Motor neuron (in vitro differentiated cells): ENCODE measurements at regions of chr10 and their contacts with region 1.

Region 1: GRCh38 chr10:123043409-123043925 is 34.7 kb downstream of the ACADSB start:
- ATAC-seq: peak; percentile 92 to 99 (median 95)
- H3K4me3 ChIP-seq: no peak overlapping the region
- H3K27ac ChIP-seq: no peak overlapping the region
- H3K4me1 ChIP-seq: no peaks in the 10 kb centered on the region

Region 2: GRCh38 chr10:123132576-123133477 is 89.4 kb after region 1 on chr10:
- in situ Hi-C with region 1: loop called in 1 of 9 experiments (anchors 25 kb)
- ATAC-seq: peak; percentile 72 to 85 (median 81)
- H3K4me3 ChIP-seq: peak overlapping the region; percentile 4 to 24 (median 18)
- H3K27ac ChIP-seq: no peak overlapping the region
- H3K4me1 ChIP-seq: peaks cover 0 to 22% of the 10 kb centered on the region in 2 donors

Region 3: GRCh38 chr10:123380497-123381085 is 337.1 kb after region 1 on chr10:
- in situ Hi-C with region 1: loop called in 4 of 9 experiments (anchors 25 kb)
- ATAC-seq: peak in 3 of 8 experiments; percentile 35 to 47 (median 36)
- H3K4me3 ChIP-seq: no peak overlapping the region
- H3K27ac ChIP-seq: no peak overlapping the region
- H3K4me1 ChIP-seq: peaks cover 0 to 6% of the 10 kb centered on the region in 2 donors

Region 4: DNA sequence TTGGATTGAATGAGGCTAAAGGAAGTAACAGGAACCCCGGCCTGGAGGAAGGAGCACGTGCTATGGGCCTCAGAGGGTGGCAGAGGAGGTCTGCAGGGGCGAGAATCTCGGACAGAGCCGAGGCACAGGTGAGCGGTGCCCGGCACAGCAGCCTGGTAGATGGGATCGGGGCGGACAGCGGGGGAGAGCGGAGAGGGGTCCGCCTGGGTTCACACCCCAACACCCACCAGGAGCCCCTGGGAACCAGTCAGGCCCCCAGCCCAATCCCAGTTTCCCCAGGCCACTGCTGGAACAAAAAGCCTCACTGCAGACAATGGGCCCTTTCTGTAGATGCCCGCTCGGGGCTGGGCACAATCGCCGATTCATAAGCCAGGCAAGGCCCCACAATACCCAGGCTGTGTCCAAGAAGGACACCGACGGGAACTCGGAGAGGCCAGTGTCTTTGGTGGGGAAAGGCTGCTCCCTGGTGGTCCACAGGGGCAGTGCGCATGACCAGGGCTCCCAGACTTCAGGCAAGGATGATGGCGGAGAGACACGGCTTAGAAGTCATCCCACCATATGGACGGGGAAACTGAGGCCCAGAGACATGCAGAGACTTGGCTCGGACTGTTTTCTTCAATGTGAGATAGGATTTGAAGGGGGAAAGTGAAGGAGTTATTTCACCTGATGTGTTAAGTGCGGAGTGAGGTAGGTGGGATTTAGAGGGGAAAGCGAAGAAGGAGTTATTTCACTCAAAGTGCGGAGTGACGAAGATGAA is 515.8 kb after region 1 on chr10:
- in situ Hi-C with region 1: loop called in 5 of 9 experiments (anchors 10 to 25 kb)
- ATAC-seq: peak; percentile 89 to 98 (median 92)
- H3K4me3 ChIP-seq: no peak overlapping the region
- H3K27ac ChIP-seq: no peak overlapping the region
- H3K4me1 ChIP-seq: no peaks in the 10 kb centered on the region